ENCODE measurements at regions of chr1 and their contacts with region 1.

Region 1: GRCh38 chr1:221069178-221069903 is 190.1 kb downstream of the HLX start:
- DNase-seq: peak; percentile 87
- ATAC-seq: peak; percentile 93
- H3K4me3 ChIP-seq: peak overlapping the region; percentile 1; the same call in 1 of the 2 replicates
- H3K27ac ChIP-seq: peak overlapping the region; percentile 89
- H3K4me1 ChIP-seq: peaks cover 33% of the 10 kb centered on the region
- H3K27me3 ChIP-seq: no peaks in the 10 kb centered on the region
- CTCF ChIP-seq: no peak
- EP300 ChIP-seq: peak; percentile 92 to 94
- POLR2A ChIP-seq: no peak
- RAD21 ChIP-seq: no peak

Region 2: DNA sequence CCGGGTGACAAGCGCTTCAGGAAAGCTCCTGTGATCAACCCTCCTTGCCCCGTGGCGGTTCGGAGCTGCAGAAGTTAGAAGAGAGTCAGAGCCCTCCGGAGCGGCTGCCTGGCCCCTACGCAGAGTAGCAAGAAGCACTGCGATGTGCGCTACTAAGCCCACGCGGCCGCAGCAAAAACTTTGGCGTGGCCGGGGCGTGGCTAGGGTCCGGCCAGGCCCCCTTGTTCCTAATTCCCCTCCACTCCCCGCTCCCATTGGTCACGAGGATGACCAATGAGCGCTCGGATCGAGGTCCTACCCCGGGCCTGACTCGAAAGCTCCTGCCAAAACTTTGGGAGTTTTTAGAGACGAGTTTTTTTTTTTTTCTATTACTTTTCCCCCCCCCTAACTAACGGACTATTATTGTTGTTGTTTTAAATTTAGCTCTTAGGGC is 190.2 kb before region 1 on chr1 and contains the start of gene HLX:
- CTCF ChIA-PET with region 1: interaction called, 8 read pairs
- POLR2A ChIA-PET with region 1: no interaction called
- RAD21 ChIA-PET with region 1: interaction called, 9 read pairs
- SMC1A ChIA-PET with region 1: interaction called, 3 read pairs
- in situ Hi-C with region 1: no loop called
- intact Hi-C with region 1: loop called (anchors 2 kb)
- DNase-seq: no peak
- ATAC-seq: peak; percentile 82
- H3K4me3 ChIP-seq: peak within 1 kb of the TSS; percentile 68
- H3K27ac ChIP-seq: no peak within 1 kb of the TSS
- H3K4me1 ChIP-seq: peaks cover 15% of the 10 kb centered on the region
- H3K27me3 ChIP-seq: peaks cover 0 to 17% of the 10 kb centered on the region in 2 experiments; a peak in 3 of 4 replicates
- CTCF ChIP-seq: no peak
- EP300 ChIP-seq: no peak
- POLR2A ChIP-seq: no peak
- RAD21 ChIP-seq: no peak
- polyA plus RNA-seq, gene HLX: 0.11 to 0.22 TPM

Region 3: GRCh38 chr1:221045842-221046831 is 23.2 kb before region 1 on chr1:
- CTCF ChIA-PET with region 1: interaction called, 16 read pairs
- POLR2A ChIA-PET with region 1: interaction called, 10 read pairs
- RAD21 ChIA-PET with region 1: interaction called, 44 read pairs
- SMC1A ChIA-PET with region 1: interaction called, 46 read pairs
- in situ Hi-C with region 1: no loop called
- intact Hi-C with region 1: loop called (anchors 1 kb)
- DNase-seq: peak; percentile 92
- ATAC-seq: peak; percentile 94
- H3K4me3 ChIP-seq: 0 out of 2 replicates have a peak overlapping the region, but pooled peaks have one; percentile 9
- H3K27ac ChIP-seq: peak overlapping the region; percentile 77
- H3K4me1 ChIP-seq: peaks cover 24% of the 10 kb centered on the region
- H3K27me3 ChIP-seq: no peaks in the 10 kb centered on the region
- CTCF ChIP-seq: no peak
- EP300 ChIP-seq: peak; percentile 87 to 90
- POLR2A ChIP-seq: no peak
- RAD21 ChIP-seq: no peak

Region 4: GRCh38 chr1:221087919-221088318 is 18.6 kb after region 1 on chr1:
- CTCF ChIA-PET with region 1: interaction called, 6 read pairs
- POLR2A ChIA-PET with region 1: interaction called, 3 read pairs
- RAD21 ChIA-PET with region 1: no interaction called
- SMC1A ChIA-PET with region 1: interaction called, 10 read pairs
- in situ Hi-C with region 1: no loop called
- intact Hi-C with region 1: no loop called
- DNase-seq: no peak
- ATAC-seq: no peak
- H3K4me3 ChIP-seq: no peak overlapping the region
- H3K27ac ChIP-seq: no peak overlapping the region
- H3K4me1 ChIP-seq: no peaks in the 10 kb centered on the region
- H3K27me3 ChIP-seq: no peaks in the 10 kb centered on the region; a peak in 1 of 4 replicates
- CTCF ChIP-seq: no peak
- EP300 ChIP-seq: no peak
- POLR2A ChIP-seq: no peak
- RAD21 ChIP-seq: no peak

Region 5: DNA sequence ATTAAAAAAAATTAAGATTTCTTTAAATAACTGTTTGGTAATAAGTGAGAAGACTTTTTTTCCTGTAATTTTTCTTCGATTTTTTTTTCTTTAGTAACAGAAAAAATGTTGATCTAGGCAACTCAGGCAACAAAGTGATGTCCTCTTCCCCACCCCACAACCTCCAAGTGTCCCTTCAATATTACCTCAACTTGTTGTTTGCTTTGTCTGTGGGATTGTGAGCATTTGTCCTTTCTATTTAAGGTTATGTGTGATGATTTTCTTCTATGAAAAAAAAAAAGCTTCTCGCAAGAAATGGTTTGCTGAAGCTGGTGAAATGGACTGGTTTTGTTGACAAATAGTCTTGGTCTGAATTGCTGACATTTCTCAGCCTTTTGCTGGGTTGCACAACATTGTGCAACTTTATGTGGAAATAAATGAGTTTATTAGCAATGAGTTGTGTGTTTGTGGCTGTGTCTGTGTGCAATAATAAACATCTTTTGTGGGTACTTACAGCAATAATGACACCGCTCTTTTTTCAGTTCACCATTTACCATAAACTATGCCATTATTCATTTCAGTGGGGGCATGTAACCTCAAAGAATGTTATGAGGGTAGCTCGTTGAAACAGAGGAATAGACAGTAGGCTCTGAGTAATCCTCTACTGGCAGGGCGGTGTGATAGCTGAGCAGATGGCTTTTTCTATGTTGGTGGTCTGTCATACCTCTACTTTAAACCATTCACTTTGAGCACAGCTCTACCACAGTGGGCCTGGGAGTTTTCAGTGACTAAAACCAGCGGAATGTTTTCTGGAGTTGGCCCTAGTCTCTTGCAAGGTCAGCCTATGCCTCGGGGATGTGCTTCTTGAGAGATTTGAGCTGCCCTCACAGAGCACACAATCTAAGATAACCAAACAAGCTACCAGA is 28.4 kb after region 1 on chr1:
- CTCF ChIA-PET with region 1: interaction called, 3 read pairs
- POLR2A ChIA-PET with region 1: no interaction called
- RAD21 ChIA-PET with region 1: interaction called, 10 read pairs
- SMC1A ChIA-PET with region 1: interaction called, 20 read pairs
- in situ Hi-C with region 1: no loop called
- intact Hi-C with region 1: no loop called
- DNase-seq: no peak
- ATAC-seq: peak; percentile 81
- H3K4me3 ChIP-seq: no peak overlapping the region
- H3K27ac ChIP-seq: no peak overlapping the region
- H3K4me1 ChIP-seq: peaks cover 5% of the 10 kb centered on the region
- H3K27me3 ChIP-seq: no peaks in the 10 kb centered on the region
- CTCF ChIP-seq: no peak
- EP300 ChIP-seq: no peak
- POLR2A ChIP-seq: no peak
- RAD21 ChIP-seq: no peak

Region 6: GRCh38 chr1:221157026-221157761 is 87.9 kb after region 1 on chr1:
- CTCF ChIA-PET with region 1: interaction called, 7 read pairs
- POLR2A ChIA-PET with region 1: interaction called, 4 read pairs
- RAD21 ChIA-PET with region 1: interaction called, 8 read pairs
- SMC1A ChIA-PET with region 1: interaction called, 9 read pairs
- in situ Hi-C with region 1: no loop called
- intact Hi-C with region 1: loop called (anchors 1 kb)
- DNase-seq: peak; percentile 41
- ATAC-seq: peak; percentile 98
- H3K4me3 ChIP-seq: no peak overlapping the region
- H3K27ac ChIP-seq: no peak overlapping the region
- H3K4me1 ChIP-seq: no peaks in the 10 kb centered on the region; the same call in 1 of the 2 replicates
- H3K27me3 ChIP-seq: no peaks in the 10 kb centered on the region
- CTCF ChIP-seq: no peak
- EP300 ChIP-seq: peak; percentile 97
- POLR2A ChIP-seq: no peak
- RAD21 ChIP-seq: no peak

Region 7: DNA sequence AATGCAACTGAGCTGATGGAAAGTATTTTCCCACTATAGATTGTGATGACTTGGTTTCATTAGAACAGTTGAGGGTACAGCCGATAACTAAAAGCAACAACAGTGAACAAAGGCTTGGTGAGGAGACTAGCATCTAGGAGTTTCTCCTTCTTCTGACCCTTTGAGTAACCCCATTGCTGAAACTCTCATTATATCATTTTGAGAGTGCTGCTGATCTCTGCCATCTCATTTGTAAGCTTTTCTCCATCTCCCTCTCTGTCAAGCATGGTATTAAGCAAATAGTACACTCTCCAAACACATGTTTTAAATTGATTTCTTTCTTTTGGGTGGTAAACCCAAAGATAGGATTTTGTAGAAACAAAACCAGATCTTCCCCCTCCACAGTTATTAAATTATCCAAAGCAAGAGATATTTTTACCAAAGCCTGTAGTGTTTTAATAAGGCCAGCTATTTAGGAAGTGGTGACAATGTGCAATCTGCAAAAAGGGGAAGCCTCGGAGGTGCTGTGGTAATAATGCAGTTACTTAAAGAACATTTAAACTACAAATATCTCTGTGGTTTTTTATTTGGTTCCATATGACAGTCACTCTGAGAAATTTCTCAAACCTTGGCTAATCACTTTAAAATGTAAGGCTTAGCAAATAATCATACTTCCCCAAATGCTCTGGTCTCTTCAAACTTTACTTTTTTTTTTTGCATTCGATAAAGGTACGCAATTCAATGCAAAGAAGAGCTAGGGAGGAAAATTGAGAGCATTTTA is 97.4 kb after region 1 on chr1:
- CTCF ChIA-PET with region 1: interaction called, 18 read pairs
- POLR2A ChIA-PET with region 1: interaction called, 22 read pairs
- RAD21 ChIA-PET with region 1: interaction called, 53 read pairs
- SMC1A ChIA-PET with region 1: interaction called, 41 read pairs
- in situ Hi-C with region 1: no loop called
- intact Hi-C with region 1: loop called (anchors 1 kb)
- DNase-seq: peak; percentile 53
- ATAC-seq: peak; percentile 92
- H3K4me3 ChIP-seq: no peak overlapping the region
- H3K27ac ChIP-seq: 0 out of 2 replicates have a peak overlapping the region, but pooled peaks have one; percentile 8
- H3K4me1 ChIP-seq: peaks cover 15% of the 10 kb centered on the region
- H3K27me3 ChIP-seq: 0 out of 4 replicates have a peak, but pooled peaks cover 0 to 2% of the 10 kb centered on the region in 2 experiments
- CTCF ChIP-seq: no peak
- EP300 ChIP-seq: peak; percentile 63 to 75; a peak in 3 of 4 replicates
- POLR2A ChIP-seq: no peak
- RAD21 ChIP-seq: no peak

Region 8: GRCh38 chr1:221664253-221664652 is 594.9 kb after region 1 on chr1:
- CTCF ChIA-PET with region 1: no interaction called
- POLR2A ChIA-PET with region 1: no interaction called
- RAD21 ChIA-PET with region 1: no interaction called
- SMC1A ChIA-PET with region 1: no interaction called
- in situ Hi-C with region 1: no loop called
- intact Hi-C with region 1: no loop called
- DNase-seq: no peak
- ATAC-seq: no peak
- H3K4me3 ChIP-seq: no peak overlapping the region
- H3K27ac ChIP-seq: no peak overlapping the region
- H3K4me1 ChIP-seq: peaks cover 4% of the 10 kb centered on the region; the same call in 1 of the 2 replicates
- H3K27me3 ChIP-seq: no peaks in the 10 kb centered on the region
- CTCF ChIP-seq: no peak
- EP300 ChIP-seq: no peak
- POLR2A ChIP-seq: no peak
- RAD21 ChIP-seq: no peak